IMR-90 (cell line): ENCODE measurements at regions of chr13 and their contacts with region 1.

Region 1: DNA sequence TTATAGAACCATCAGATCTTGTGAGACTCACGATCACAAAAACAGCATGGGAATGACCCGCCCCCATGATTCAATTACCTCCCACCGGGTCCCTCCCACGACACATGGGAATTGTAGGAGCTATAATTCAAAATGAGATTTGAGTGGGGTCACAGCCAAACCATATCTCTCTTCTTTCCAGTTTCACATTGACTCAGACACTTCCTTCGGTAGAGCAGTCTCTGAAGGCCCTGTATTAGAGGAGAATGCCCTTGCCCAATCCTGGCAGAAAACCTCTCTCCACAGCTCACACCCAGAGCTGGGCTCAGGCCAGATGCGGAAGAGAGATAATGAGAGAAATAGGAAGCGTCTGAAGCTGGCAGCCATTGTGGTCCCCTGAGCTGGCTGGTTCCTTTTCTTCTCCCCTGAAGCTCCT is 72.4 kb upstream of the CLDN10 start:
- DNase-seq: no peak
- ATAC-seq: no peak
- H3K4me3 ChIP-seq: no peak overlapping the region
- H3K27ac ChIP-seq: no peak overlapping the region
- H3K4me1 ChIP-seq: no peaks in the 10 kb centered on the region
- H3K27me3 ChIP-seq: peaks cover 21% of the 10 kb centered on the region
- CTCF ChIP-seq: no peak
- POLR2A ChIP-seq: no peak
- RAD21 ChIP-seq: no peak

Region 2: DNA sequence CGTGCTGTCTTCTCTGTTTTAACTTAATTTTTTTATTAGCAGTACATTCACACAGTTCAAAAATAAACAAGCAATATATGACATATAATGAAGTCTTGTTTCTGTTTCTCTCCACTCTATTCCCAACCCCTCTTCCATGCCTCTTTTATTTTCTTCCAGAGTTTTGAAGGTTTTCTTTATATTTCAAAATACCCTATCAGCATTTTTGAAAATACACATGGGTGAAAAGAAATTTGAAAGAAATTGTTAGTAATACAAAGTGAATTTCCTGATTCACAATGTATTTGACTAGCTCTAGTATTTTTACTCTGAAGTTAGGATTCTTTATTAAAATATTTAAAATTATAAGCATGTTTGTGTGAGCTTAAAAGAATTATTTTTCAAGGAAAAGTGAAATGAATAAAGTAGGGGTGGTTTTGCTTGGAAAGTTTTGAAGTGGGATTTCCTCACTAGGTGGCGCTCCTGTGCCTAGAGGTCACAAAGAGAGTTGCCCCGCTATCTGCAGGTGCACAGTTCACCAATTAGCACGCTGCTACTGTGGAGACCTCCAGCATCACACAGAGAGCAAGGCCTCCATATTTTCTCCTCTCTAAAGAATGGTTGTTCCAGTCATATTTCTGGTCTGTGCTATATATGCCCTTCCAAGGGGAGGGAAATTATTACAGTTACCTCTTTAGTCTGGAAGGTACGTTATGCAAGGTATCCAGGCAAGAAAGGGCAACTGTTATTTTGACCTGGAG is 805.4 kb before region 1 on chr13:
- CTCF ChIA-PET with region 1: interaction called, 3 read pairs
- POLR2A ChIA-PET with region 1: no interaction called
- dilution Hi-C with region 1: no loop called
- in situ Hi-C with region 1: no loop called
- intact Hi-C with region 1: loop called (anchors 1 kb)
- DNase-seq: peak; percentile 30
- ATAC-seq: no peak; the same call in 1 of the 2 replicates
- H3K4me3 ChIP-seq: no peak overlapping the region
- H3K27ac ChIP-seq: no peak overlapping the region
- H3K4me1 ChIP-seq: no peaks in the 10 kb centered on the region
- H3K27me3 ChIP-seq: peaks cover 16% of the 10 kb centered on the region
- CTCF ChIP-seq: peak; percentile 50
- POLR2A ChIP-seq: no peak
- RAD21 ChIP-seq: peak; percentile 46

Region 3: GRCh38 chr13:96632536-96633320 is 1152.6 kb after region 1 on chr13:
- CTCF ChIA-PET with region 1: no interaction called
- POLR2A ChIA-PET with region 1: no interaction called
- dilution Hi-C with region 1: no loop called
- in situ Hi-C with region 1: no loop called
- intact Hi-C with region 1: no loop called
- DNase-seq: no peak
- ATAC-seq: no peak
- H3K4me3 ChIP-seq: no peak overlapping the region
- H3K27ac ChIP-seq: no peak overlapping the region
- H3K4me1 ChIP-seq: no peaks in the 10 kb centered on the region
- H3K27me3 ChIP-seq: no peaks in the 10 kb centered on the region
- CTCF ChIP-seq: no peak
- POLR2A ChIP-seq: no peak
- RAD21 ChIP-seq: no peak